ENCODE measurements at regions of chr17 and their contacts with region 1.

Region 1: GRCh38 chr17:6421700-6422604 is 13.0 kb downstream of the AIPL1 start:
- DNase-seq: peak; percentile 77 to 91
- H3K4me3 ChIP-seq: no peak overlapping the region
- H3K27ac ChIP-seq: no peak overlapping the region
- H3K4me1 ChIP-seq: no peaks in the 10 kb centered on the region
- H3K27me3 ChIP-seq: peaks cover 0 to 61% (median 11%) of the 10 kb centered on the region in 3 donors
- CTCF ChIP-seq: peak in 5 of 7 experiments; percentile 57 to 79 (median 73)
- EP300 ChIP-seq: no peak
- POLR2A ChIP-seq: no peak

Region 2: DNA sequence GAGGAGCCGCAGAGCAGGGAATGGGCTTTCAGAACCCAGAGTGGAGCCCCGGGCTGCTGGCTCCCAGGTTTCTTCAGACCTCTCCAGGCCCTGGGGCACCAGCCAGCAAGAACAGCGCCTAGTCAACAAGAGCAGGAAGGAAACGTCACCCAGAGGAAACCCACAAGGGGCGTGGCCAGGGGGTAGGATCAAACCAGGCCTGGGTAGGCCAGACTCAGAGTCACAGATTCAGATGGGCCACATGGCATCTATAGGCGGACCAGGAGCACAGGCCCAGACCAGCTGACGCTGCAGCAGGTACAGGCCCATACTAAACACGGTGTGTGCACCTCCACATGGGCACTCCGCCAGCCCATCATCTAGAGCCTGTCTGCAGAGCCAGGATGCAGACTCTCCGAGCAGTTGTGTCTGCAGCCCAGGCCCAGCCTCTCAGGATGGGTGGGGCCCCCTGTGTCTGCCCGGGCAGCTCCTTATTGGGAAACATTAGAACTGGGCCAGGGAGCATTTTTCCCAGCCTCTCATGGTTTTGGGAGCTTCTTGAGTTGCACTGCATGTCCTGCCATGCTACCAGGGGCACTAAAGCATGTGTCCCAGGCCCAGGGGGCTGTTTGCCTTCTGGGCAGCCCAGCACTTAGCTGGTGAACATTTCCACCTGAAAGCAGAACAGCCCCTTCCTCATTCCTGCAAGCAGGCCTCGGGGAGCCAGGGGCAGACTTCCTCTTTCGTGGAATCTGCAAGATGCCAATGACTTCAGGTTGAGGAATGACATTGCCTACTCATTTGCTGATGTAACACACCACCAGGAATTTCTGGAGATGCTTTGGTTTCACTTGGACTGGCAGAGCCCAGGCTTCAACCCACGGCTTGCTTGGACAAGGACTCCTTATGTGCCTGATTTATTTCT is 837.3 kb before region 1 on chr17 and contains the start of gene NLRP1:
- intact Hi-C with region 1: loop called (anchors 2 kb)
- DNase-seq: peak; percentile 76 to 86
- H3K4me3 ChIP-seq: peak within 1 kb of the TSS; percentile 37 to 45 (median 42)
- H3K27ac ChIP-seq: peak within 1 kb of the TSS; percentile 19 to 83 (median 81)
- H3K4me1 ChIP-seq: peaks cover 7 to 36% (median 25%) of the 10 kb centered on the region in 4 donors
- H3K27me3 ChIP-seq: peaks cover 0 to 17% (median 0%) of the 10 kb centered on the region in 3 donors
- CTCF ChIP-seq: no peak
- EP300 ChIP-seq: no peak
- POLR2A ChIP-seq: no peak
- total RNA-seq, gene NLRP1: 17.8 to 83.7 (median 38.4) TPM

Region 3: GRCh38 chr17:6729531-6729930 is 307.6 kb after region 1 on chr17:
- intact Hi-C with region 1: no loop called
- DNase-seq: no peak
- H3K4me3 ChIP-seq: no peak overlapping the region
- H3K27ac ChIP-seq: no peak overlapping the region
- H3K4me1 ChIP-seq: no peaks in the 10 kb centered on the region
- H3K27me3 ChIP-seq: no peaks in the 10 kb centered on the region
- CTCF ChIP-seq: no peak
- EP300 ChIP-seq: no peak
- POLR2A ChIP-seq: no peak

Measured in stomach (tissue), 19 donors.